PC-3 (cell line): ENCODE measurements at regions of chr19 and their contacts with region 1.

Region 1: GRCh38 chr19:15555759-15556633 is 47.7 kb downstream of the CYP4F22 start:
- DNase-seq: peak; percentile 95
- ATAC-seq: peak; percentile 83
- H3K4me3 ChIP-seq: peak overlapping the region; percentile 63
- H3K27ac ChIP-seq: no peak overlapping the region
- H3K4me1 ChIP-seq: 0 out of 2 replicates have a peak, but pooled peaks cover 8% of the 10 kb centered on the region
- H3K27me3 ChIP-seq: no peaks in the 10 kb centered on the region
- CTCF ChIP-seq: peak; percentile 74

Region 2: GRCh38 chr19:15161028-15161989 is 394.7 kb before region 1 on chr19:
- CTCF ChIA-PET with region 1: no interaction called
- POLR2A ChIA-PET with region 1: no interaction called
- intact Hi-C with region 1: loop called (anchors 5 kb)
- DNase-seq: peak; percentile 51
- ATAC-seq: no peak
- H3K4me3 ChIP-seq: no peak overlapping the region
- H3K27ac ChIP-seq: no peak overlapping the region
- H3K4me1 ChIP-seq: no peaks in the 10 kb centered on the region
- H3K27me3 ChIP-seq: no peaks in the 10 kb centered on the region
- CTCF ChIP-seq: peak; percentile 79

Region 3: GRCh38 chr19:15379083-15379995 is 176.7 kb before region 1 on chr19 and contains the start of gene AKAP8:
- CTCF ChIA-PET with region 1: interaction called, 13 read pairs
- POLR2A ChIA-PET with region 1: interaction called, 3 read pairs
- intact Hi-C with region 1: no loop called
- DNase-seq: peak; percentile 99
- ATAC-seq: peak; percentile 87
- H3K4me3 ChIP-seq: peak within 1 kb of the TSS; percentile 88
- H3K27ac ChIP-seq: peak within 1 kb of the TSS; percentile 85
- H3K4me1 ChIP-seq: peaks cover 21% of the 10 kb centered on the region
- H3K27me3 ChIP-seq: no peaks in the 10 kb centered on the region
- CTCF ChIP-seq: no peak
- total RNA-seq, gene AKAP8: 36.3 and 48.0 TPM in 2 replicates

Region 4: DNA sequence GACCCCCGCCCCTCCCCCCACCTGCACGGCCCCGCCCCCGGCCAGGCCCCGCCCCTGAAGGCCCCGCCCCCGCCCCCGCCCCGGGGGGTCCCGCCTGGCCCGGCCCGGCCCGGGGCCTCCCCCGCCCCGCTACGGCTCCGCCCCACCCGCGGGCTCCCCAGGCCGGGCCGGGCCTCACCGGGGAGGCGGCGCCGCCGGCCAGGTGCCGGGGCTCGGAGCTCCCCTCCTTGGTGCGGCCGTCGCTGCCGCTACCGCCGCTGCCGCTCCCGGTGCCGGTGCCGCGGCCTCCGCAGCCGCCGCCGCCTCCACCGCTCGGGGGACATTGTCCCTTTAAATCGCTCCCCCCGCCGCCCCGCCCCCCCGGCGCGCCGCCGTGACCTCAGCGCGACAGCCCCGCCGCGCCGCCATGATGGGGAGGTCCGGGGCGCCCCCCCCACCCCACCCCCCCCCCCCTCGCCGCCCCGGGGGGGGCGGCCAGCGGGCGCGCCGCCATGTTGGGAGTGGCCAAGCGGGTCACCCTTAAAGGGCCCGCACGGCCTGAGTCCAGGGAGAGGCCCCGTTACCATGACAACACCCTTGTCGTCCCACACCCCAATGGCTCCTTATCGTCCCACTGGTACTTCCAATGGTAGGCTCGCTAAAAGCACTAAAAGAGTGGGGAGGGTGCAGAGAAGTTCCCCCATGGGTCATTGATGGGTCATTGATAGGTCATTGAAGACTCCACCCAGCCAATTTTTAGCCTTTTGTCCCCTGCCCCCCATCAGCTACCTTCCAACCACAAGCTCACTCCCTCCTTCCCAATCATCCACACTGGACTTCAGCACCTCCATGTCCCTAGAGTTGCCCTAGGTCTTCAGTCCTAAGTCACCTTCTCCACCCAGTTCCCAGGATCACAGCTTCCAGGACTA is 106.1 kb before region 1 on chr19 and contains the start of gene WIZ:
- CTCF ChIA-PET with region 1: no interaction called
- POLR2A ChIA-PET with region 1: no interaction called
- intact Hi-C with region 1: loop called (anchors 10 kb)
- DNase-seq: peak; percentile 72
- ATAC-seq: peak; percentile 34
- H3K4me3 ChIP-seq: peak within 1 kb of the TSS; percentile 57
- H3K27ac ChIP-seq: no peak within 1 kb of the TSS
- H3K4me1 ChIP-seq: peaks cover 15% of the 10 kb centered on the region; the same call in 1 of the 2 replicates
- H3K27me3 ChIP-seq: no peaks in the 10 kb centered on the region
- CTCF ChIP-seq: no peak
- total RNA-seq, gene WIZ: 30.9 and 35.1 TPM in 2 replicates

Region 5: GRCh38 chr19:15466851-15467733 is 88.9 kb before region 1 on chr19:
- CTCF ChIA-PET with region 1: no interaction called
- POLR2A ChIA-PET with region 1: no interaction called
- intact Hi-C with region 1: no loop called
- DNase-seq: peak; percentile 89
- ATAC-seq: peak; percentile 86
- H3K4me3 ChIP-seq: no peak overlapping the region
- H3K27ac ChIP-seq: peak overlapping the region; percentile 64
- H3K4me1 ChIP-seq: peaks cover 14% of the 10 kb centered on the region
- H3K27me3 ChIP-seq: no peaks in the 10 kb centered on the region
- CTCF ChIP-seq: no peak